ENCODE measurements at regions of chr10 and their contacts with region 1.

Region 1: DNA sequence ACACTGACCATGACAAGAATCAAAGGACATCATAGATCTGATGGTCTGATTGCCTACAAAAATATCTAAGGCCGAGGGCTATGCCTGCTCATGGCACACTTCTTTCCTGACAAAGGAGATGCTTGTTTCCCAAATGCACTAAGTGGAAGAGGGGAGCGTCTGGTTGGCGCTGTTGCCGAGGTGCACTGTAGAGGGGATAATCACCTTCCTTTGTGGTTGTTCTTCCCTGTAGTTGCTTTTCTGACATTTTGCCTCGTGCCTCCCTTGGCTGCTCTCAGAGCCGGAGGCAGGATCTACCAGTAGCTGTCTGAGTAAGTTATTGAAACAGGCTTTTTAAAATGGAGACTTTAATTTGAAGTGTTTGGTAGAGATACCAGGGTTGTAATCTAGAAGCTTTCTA is 352.0 kb downstream of the SORCS3 start:
- DNase-seq: no peak
- ATAC-seq: no peak
- H3K4me3 ChIP-seq: no peak overlapping the region
- H3K27ac ChIP-seq: no peak overlapping the region
- H3K4me1 ChIP-seq: no peaks in the 10 kb centered on the region
- H3K27me3 ChIP-seq: no peaks in the 10 kb centered on the region
- CTCF ChIP-seq: no peak
- POLR2A ChIP-seq: no peak

Region 2: GRCh38 chr10:104966563-104967297 is 26.4 kb before region 1 on chr10:
- intact Hi-C with region 1: loop called in 1 of 10 experiments (anchors 2 kb)
- DNase-seq: no peak
- ATAC-seq: no peak
- H3K4me3 ChIP-seq: no peak overlapping the region
- H3K27ac ChIP-seq: no peak overlapping the region
- H3K4me1 ChIP-seq: no peaks in the 10 kb centered on the region
- H3K27me3 ChIP-seq: no peaks in the 10 kb centered on the region
- CTCF ChIP-seq: no peak
- POLR2A ChIP-seq: no peak

Measured in heart left ventricle (tissue), 16 donors.